ENCODE measurements at regions of chr6 and their contacts with region 1.

Region 1: GRCh38 chr6:108526739-108527174 is 34.0 kb upstream of the FOXO3 start:
- DNase-seq: no peak
- ATAC-seq: peak; percentile 45
- H3K4me3 Mint-ChIP-seq: no peak overlapping the region
- H3K27ac Mint-ChIP-seq: no peak overlapping the region
- H3K4me1 Mint-ChIP-seq: no peaks in the 10 kb centered on the region
- H3K27me3 Mint-ChIP-seq: no peaks in the 10 kb centered on the region
- CTCF ChIP-seq: peak; percentile 79

Region 2: DNA sequence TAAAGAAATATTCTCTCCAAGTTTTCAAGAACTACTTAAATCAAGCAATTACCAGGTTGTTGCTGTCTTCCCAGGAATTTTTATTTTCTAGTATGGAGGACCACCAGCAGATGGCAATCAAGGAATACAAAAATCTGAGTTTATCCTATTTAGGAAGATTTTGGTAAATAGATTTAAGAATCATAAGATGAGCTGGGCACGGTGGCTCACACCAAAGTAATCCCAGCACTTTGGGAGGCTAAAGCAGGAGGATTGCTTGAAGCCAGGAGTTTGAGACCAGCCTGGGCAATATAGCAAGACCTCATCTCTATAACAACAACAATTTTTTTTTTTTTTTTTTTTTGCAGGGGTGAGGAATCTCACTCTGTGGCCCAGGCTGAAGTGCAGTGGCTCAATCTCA is 549.5 kb before region 1 on chr6:
- CTCF ChIA-PET with region 1: no interaction called
- POLR2A ChIA-PET with region 1: no interaction called
- intact Hi-C with region 1: loop called (anchors 1 kb)
- DNase-seq: no peak
- ATAC-seq: no peak
- H3K4me3 Mint-ChIP-seq: no peak overlapping the region
- H3K27ac Mint-ChIP-seq: no peak overlapping the region
- H3K4me1 Mint-ChIP-seq: no peaks in the 10 kb centered on the region
- H3K27me3 Mint-ChIP-seq: peaks cover 2% of the 10 kb centered on the region
- CTCF ChIP-seq: no peak

Region 3: GRCh38 chr6:108174371-108175175 is 352.2 kb before region 1 on chr6:
- CTCF ChIA-PET with region 1: no interaction called
- POLR2A ChIA-PET with region 1: no interaction called
- intact Hi-C with region 1: loop called (anchors 5 kb)
- DNase-seq: peak; percentile 28
- ATAC-seq: peak; percentile 57
- H3K4me3 Mint-ChIP-seq: no peak overlapping the region
- H3K27ac Mint-ChIP-seq: no peak overlapping the region
- H3K4me1 Mint-ChIP-seq: peaks cover 26% of the 10 kb centered on the region
- H3K27me3 Mint-ChIP-seq: peaks cover 74% of the 10 kb centered on the region
- CTCF ChIP-seq: no peak

Region 4: DNA sequence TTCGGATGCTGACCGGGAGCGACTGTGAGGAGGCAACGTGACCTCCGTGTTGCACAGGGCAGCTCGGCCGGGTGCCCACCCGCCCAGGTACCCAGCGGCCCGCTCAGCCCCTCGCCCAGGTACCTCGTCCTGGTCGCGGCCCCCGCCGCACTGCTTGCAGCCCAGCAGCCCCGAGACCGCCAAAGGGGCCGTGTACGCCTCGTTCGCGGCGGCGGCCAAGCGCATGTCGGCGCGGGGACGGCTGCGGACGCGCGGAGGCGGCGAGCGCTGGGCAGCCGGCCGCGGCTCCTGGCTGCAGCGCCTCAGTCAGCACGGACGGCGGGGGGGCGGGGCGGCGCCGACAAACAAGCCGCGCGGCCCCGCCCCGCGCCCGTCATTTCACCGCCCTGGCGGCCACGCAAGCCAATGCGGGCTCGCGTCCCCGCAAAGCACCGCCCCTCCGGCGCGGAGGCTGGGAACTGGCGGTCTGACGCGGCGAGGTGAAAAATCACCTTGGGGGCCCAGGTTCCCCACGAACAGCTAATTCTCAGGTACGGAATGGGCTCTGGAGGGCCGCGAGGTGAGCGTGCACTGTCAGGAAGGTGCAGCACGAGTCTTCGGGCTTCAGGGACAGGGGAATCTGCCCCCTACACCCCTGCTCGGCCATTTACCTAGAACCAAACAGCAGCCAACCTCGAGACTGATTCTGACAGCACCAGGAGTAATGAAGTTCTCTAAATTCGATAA is 482.6 kb after region 1 on chr6:
- CTCF ChIA-PET with region 1: no interaction called
- POLR2A ChIA-PET with region 1: interaction called, 12 read pairs
- intact Hi-C with region 1: no loop called
- DNase-seq: peak; percentile 87
- ATAC-seq: peak; percentile 97
- H3K4me3 Mint-ChIP-seq: peak overlapping the region; percentile 97
- H3K27ac Mint-ChIP-seq: peak overlapping the region; percentile 95
- H3K4me1 Mint-ChIP-seq: peaks cover 65% of the 10 kb centered on the region
- H3K27me3 Mint-ChIP-seq: no peaks in the 10 kb centered on the region
- CTCF ChIP-seq: no peak